ENCODE measurements at regions of chr19 and their contacts with region 1.

Region 1: DNA sequence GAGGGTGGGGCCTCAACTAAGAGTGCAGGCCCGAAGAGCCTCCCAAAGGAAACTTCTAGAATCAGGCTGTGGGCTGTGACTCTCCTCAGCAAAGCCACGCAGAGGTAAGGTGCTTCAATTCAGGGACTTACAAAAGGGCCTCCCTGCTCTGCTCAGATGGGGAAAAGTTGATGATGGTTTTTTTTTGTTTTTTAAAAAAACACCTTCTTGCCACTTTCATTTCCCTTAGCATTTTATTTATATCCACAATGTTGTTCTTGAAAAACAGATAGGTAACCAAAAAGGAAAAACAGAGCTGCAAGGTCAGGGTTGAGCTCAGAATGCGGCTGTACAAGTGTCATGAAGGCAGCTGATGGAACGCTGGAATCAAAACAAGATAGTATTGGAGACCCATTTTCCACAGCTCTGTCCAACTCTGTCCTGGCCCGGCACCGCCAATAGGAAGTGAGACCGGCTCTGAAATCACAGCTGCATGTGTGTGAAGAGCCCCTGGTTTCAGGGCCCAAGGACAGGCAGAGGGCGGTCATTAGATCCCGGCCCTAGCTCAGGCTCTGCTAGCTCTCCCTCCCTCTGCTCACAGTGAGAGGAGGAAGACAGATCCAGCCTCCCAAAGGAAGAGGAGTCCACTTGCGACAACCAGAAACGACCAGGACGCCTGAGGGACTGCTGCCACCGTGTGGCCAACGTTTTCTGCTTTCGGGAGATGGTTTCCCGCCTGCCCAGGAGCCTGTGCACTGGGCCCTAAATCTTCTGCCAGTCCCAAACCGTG is 58.3 kb downstream of the KLF2 start:
- DNase-seq: peak; percentile 93
- H3K4me3 ChIP-seq: peak overlapping the region; percentile 24; the same call in 1 of the 2 replicates
- H3K27ac ChIP-seq: peak overlapping the region; percentile 85
- H3K4me1 ChIP-seq: peaks cover 16% of the 10 kb centered on the region
- H3K27me3 ChIP-seq: no peaks in the 10 kb centered on the region

Region 2: DNA sequence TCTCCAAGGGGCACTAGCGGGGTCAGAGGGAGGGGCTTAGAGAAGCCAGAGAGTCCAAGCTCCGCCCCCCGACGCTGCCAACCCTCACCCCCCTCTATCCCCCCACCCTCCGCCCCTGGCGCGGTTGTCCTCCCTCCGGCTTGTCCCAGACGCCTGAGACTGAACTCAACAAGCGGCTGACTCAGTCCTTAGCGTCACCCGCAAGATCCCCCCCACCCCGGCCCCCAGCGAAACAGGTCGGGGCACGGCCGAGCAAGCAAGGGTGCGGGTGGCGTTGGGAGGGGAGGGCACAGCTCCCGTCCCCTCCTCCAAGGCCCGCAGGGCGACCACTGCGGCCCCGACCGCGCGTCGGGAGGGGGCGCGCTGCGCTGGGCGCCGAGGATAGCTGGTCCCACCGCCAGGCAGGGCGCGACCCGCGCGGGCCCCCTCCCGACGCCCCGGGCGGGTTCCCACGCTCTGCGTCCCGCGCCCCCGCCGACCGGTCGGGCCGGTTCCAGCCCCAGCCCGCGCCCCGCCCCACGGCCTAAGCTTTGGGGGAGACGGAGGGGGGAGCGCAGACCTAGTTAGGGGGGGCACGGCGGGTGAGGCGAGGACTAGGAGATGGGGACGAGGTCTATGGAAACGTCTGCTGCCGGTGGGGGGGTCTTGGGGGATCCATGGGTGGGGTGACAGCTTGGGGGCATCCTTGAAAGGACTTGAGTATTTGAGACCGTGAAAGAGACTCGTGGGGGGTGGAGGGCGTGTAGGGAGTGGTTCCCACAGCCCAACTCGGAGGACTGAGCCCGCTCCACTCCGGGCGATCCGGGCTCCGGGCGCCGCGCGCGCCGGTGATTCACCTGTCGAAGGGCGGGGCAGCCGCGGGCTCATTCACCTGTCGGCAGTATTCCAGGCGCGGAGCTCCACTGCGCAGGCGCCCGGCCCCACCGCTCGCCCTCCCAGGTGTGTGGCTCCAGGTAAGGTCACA is 1187.3 kb before region 1 on chr19:
- in situ Hi-C with region 1: no loop called
- DNase-seq: peak; percentile 95
- H3K4me3 ChIP-seq: peak overlapping the region; percentile 66
- H3K27ac ChIP-seq: peak overlapping the region; percentile 95
- H3K4me1 ChIP-seq: peaks cover 7% of the 10 kb centered on the region
- H3K27me3 ChIP-seq: no peaks in the 10 kb centered on the region

Region 3: GRCh38 chr19:15629003-15629880 is 753.7 kb before region 1 on chr19:
- in situ Hi-C with region 1: loop called (anchors 25 kb)
- DNase-seq: peak; percentile 69
- H3K4me3 ChIP-seq: no peak overlapping the region
- H3K27ac ChIP-seq: no peak overlapping the region
- H3K4me1 ChIP-seq: no peaks in the 10 kb centered on the region
- H3K27me3 ChIP-seq: no peaks in the 10 kb centered on the region

Region 4: GRCh38 chr19:16247353-16248182 is 135.4 kb before region 1 on chr19:
- in situ Hi-C with region 1: loop called (anchors 5 kb)
- DNase-seq: peak; percentile 79
- H3K4me3 ChIP-seq: no peak overlapping the region
- H3K27ac ChIP-seq: no peak overlapping the region
- H3K4me1 ChIP-seq: no peaks in the 10 kb centered on the region
- H3K27me3 ChIP-seq: no peaks in the 10 kb centered on the region

Measured in GM23248 (cell line).